WTC11 (cell line): ENCODE measurements at regions of chr5 and their contacts with region 1.

Region 1: DNA sequence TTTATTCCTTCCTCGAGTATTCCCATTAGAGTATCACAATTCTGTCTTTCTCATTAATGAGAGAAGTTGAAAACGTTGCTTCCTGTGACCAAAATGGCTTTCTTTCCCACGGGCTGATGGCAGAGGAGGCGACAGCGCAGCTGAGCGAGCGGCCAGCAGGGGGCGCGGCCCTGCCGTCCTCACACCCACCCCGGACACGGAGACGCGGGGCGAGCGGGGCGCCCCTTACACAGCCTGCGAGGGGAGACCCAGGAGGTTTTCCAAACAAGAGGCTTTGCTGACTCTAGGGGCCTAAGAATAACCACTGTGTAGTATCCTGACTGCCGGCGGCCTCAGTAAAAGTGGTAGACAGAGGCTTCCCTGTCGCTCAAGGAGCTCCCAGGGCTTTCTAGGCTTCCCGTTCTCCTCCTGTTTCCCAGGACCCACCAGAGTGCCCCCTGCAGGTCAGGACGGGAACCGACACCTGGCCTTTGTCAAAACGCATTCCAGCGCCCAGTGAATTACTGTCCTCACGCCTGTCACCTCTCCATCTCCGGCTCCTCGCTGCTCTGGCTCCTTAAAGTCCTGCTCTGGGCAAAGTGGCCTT is 27.3 kb upstream of the FGF1 start:
- DNase-seq: peak; percentile 96
- ATAC-seq: peak; percentile 58
- H3K4me3 Mint-ChIP-seq: peak overlapping the region; percentile 51
- H3K27ac Mint-ChIP-seq: peak overlapping the region; percentile 57; the same call in 1 of the 2 replicates
- H3K4me1 Mint-ChIP-seq: peaks cover 55% of the 10 kb centered on the region
- H3K27me3 Mint-ChIP-seq: peaks cover 3% of the 10 kb centered on the region; the same call in 1 of the 2 replicates
- CTCF ChIP-seq: peak; percentile 99

Region 2: GRCh38 chr5:142453932-142454331 is 259.3 kb before region 1 on chr5:
- CTCF ChIA-PET with region 1: no interaction called
- POLR2A ChIA-PET with region 1: no interaction called
- DNase-seq: no peak
- ATAC-seq: no peak
- H3K4me3 Mint-ChIP-seq: no peak overlapping the region
- H3K27ac Mint-ChIP-seq: no peak overlapping the region
- H3K4me1 Mint-ChIP-seq: no peaks in the 10 kb centered on the region
- H3K27me3 Mint-ChIP-seq: no peaks in the 10 kb centered on the region
- CTCF ChIP-seq: no peak

Region 3: DNA sequence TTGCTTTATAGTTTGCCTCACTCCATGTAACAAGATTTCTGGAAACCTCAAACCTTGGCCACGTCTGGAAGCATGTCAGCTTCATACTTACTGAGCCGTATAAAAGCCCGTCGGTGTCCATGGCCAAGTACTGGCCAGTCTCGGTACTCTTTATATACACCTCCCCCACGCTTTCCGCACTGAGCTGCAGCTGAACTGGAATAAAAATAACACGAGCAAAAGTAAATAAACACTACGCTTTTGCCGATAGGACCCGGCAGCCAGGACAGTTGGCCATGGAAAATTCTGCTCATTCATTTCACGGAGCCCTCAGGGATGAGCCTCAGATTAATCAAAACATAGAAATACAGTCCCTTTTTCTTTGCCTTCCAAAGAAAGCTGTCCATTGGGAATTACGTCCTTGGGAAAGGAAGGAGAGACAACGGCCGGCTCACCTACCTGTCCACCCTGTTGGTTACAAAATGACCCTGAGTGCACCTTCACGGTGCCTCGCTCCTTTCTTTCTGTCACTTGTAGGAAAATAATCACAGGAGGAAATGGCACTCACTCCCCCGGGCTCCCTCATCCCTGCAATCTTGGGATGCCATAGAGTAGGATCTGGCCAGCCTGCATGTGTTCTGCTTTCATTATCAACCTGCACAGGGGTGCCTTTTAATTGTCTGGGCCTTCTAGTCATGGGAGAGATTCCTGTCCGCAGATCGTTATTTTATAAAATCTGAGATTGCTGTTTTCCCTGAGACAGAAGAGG is 112.4 kb before region 1 on chr5:
- CTCF ChIA-PET with region 1: interaction called, 12 read pairs
- POLR2A ChIA-PET with region 1: interaction called, 3 read pairs
- DNase-seq: no peak
- ATAC-seq: no peak
- H3K4me3 Mint-ChIP-seq: no peak overlapping the region
- H3K27ac Mint-ChIP-seq: no peak overlapping the region
- H3K4me1 Mint-ChIP-seq: peaks cover 30% of the 10 kb centered on the region
- H3K27me3 Mint-ChIP-seq: no peaks in the 10 kb centered on the region
- CTCF ChIP-seq: no peak

Region 4: GRCh38 chr5:142674531-142675469 is 38.4 kb before region 1 on chr5:
- CTCF ChIA-PET with region 1: interaction called, 14 read pairs
- POLR2A ChIA-PET with region 1: no interaction called
- DNase-seq: no peak
- ATAC-seq: peak; percentile 21; the same call in 1 of the 2 replicates
- H3K4me3 Mint-ChIP-seq: no peak overlapping the region
- H3K27ac Mint-ChIP-seq: no peak overlapping the region
- H3K4me1 Mint-ChIP-seq: peaks cover 21% of the 10 kb centered on the region
- H3K27me3 Mint-ChIP-seq: no peaks in the 10 kb centered on the region; the same call in 1 of the 2 replicates
- CTCF ChIP-seq: no peak

Region 5: DNA sequence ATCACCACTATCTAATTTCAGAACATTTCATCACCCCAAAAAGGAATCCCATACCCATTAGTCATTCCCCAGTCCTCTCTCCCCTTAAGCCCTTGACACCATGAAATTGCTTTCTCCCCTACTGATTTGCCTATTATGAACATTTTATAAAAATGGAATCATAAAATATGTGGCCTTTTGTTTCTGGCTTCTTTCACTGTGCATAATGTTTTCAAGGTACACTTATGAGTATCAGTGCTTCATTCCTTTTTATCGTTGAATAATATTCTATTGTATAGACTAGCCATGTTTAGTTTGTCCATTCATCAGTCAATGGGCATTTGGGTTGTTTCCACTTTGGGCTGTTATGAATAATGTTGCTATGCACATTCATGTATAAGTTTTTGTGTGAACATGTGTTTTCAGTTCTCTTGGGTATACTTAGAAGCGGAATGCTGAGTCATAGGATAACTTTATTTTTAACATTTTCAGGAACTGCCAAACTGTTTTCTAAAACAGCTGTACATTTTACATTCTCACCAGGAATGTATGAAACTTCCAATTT is 13.0 kb after region 1 on chr5:
- CTCF ChIA-PET with region 1: interaction called, 36 read pairs
- POLR2A ChIA-PET with region 1: no interaction called
- DNase-seq: no peak
- ATAC-seq: no peak
- H3K4me3 Mint-ChIP-seq: no peak overlapping the region
- H3K27ac Mint-ChIP-seq: no peak overlapping the region
- H3K4me1 Mint-ChIP-seq: 0 out of 2 replicates have a peak, but pooled peaks cover 4% of the 10 kb centered on the region
- H3K27me3 Mint-ChIP-seq: no peaks in the 10 kb centered on the region
- CTCF ChIP-seq: no peak

Region 6: DNA sequence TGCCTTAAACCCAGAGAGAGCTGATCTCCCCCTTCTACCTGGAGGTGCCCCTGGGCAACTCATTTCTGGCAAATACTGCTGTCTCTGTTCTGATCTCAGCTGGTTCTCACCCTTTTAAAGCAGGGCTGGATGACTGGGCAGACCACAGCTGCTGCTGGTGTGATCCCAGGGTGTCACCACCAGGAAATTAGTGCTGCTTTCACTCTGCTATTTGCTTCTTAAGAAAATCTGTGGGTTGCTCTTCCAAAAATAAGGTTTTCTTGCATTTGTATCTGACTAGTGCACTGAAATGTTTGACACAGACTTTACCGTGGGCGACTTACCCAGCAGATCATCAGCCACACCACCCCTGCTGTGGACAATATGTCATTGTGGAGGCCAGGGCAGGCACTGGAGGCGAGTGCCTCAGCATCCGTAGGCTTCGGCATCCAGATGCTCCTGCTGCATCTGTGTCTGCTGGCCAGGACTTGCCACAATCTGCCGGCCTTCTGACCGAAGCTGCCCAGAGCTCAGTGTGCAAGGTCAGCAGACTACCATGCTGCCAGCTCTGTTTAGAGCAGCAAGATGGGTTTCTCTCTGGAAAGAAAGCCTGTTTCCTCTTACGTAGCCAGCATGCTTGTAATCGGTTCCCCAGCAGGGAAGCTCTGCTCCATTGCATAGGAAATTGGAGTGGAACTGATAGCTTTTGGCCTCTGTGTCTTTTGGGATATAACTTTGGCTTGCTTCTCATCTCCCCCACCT is 70.6 kb after region 1 on chr5:
- CTCF ChIA-PET with region 1: interaction called, 26 read pairs
- POLR2A ChIA-PET with region 1: no interaction called
- DNase-seq: no peak
- ATAC-seq: peak; percentile 27
- H3K4me3 Mint-ChIP-seq: peak overlapping the region; percentile 29; the same call in 1 of the 2 replicates
- H3K27ac Mint-ChIP-seq: peak overlapping the region; percentile 91
- H3K4me1 Mint-ChIP-seq: peaks cover 50% of the 10 kb centered on the region
- H3K27me3 Mint-ChIP-seq: no peaks in the 10 kb centered on the region
- CTCF ChIP-seq: no peak

Region 7: DNA sequence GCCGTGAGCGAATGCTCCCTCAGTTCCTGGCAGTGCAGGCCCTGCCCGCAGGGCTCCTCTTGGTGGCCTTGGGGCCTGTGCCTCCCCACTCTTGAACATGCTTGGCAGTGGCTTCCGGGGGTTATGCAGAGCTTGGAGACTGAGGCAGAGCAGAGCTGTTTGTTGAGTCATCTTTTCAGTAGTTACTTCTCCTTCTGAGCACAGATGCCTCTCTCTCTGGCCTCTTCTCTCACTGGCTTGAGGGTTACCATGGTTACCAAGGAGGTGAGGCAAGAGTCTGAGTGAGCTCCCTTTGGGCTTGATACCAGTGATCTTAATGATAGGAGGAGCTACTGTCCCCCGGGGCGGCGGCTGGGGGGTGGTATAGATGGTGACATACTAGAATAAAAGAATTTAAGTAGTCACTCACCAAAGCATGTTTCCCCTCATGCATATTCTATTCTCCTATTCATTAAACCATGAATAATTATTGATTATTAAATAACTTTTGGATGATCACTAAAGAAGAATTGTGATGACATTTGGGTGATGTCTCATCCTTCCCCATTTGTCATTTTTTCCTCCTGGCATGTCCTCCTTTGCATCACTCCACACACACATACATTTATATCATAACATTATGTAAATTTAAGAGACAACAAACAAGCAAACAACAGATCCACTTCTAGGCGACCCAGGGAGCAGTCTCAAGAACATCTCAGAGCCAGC is 168.0 kb after region 1 on chr5:
- CTCF ChIA-PET with region 1: interaction called, 70 read pairs
- POLR2A ChIA-PET with region 1: interaction called, 5 read pairs
- DNase-seq: no peak
- ATAC-seq: peak; percentile 73
- H3K4me3 Mint-ChIP-seq: no peak overlapping the region
- H3K27ac Mint-ChIP-seq: no peak overlapping the region; the same call in 1 of the 2 replicates
- H3K4me1 Mint-ChIP-seq: peaks cover 44% of the 10 kb centered on the region
- H3K27me3 Mint-ChIP-seq: no peaks in the 10 kb centered on the region
- CTCF ChIP-seq: no peak

Region 8: DNA sequence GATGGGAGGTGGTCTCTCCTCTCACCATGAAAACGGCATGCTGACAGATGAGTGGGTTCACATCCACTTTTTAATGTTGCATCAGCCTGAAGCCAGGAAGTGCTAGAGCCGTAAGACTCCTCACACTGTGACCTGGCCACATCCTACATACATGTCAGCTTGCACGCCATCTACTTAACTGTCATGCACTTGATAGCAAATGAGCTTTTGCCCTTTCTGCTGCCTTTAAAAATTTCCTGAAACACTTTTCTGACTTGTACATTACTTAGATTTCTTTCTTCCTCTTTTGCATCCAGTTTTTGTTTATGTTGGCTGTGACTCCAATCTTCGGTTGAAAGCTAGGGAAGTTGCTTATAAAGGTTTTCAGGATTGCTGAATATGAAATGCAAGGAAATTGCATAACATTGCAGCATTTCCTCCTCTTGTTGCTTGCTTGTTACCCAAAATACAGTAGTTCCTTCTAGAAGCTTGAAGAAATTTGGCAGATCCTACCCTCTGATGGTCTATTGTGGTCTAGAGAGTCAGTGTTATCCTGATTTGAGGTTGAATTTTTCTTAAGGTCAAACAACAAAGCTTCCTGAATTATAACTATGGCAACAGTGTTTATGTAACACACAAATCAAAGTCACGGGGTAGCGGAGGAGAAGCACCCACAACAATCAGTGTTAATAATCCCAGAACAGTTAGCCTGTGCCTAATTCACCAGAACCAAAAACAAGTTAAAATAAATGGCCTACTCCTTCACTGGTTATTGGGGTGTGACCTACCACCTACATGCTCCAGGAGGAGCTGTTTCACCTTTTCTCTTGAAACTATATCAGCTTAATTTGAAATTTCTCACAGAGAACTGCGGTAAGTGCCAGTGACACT is 289.5 kb after region 1 on chr5:
- CTCF ChIA-PET with region 1: interaction called, 10 read pairs
- POLR2A ChIA-PET with region 1: no interaction called
- DNase-seq: no peak
- ATAC-seq: peak; percentile 58
- H3K4me3 Mint-ChIP-seq: no peak overlapping the region
- H3K27ac Mint-ChIP-seq: peak overlapping the region; percentile 51; the same call in 1 of the 2 replicates
- H3K4me1 Mint-ChIP-seq: peaks cover 22% of the 10 kb centered on the region
- H3K27me3 Mint-ChIP-seq: no peaks in the 10 kb centered on the region
- CTCF ChIP-seq: peak; percentile 41; the same call in 1 of the 2 replicates

Region 9: GRCh38 chr5:143119291-143119769 is 406.1 kb after region 1 on chr5:
- CTCF ChIA-PET with region 1: no interaction called
- POLR2A ChIA-PET with region 1: no interaction called
- DNase-seq: no peak
- ATAC-seq: no peak
- H3K4me3 Mint-ChIP-seq: no peak overlapping the region
- H3K27ac Mint-ChIP-seq: peak overlapping the region; percentile 52; the same call in 1 of the 2 replicates
- H3K4me1 Mint-ChIP-seq: peaks cover 42% of the 10 kb centered on the region
- H3K27me3 Mint-ChIP-seq: no peaks in the 10 kb centered on the region
- CTCF ChIP-seq: no peak